ENCODE measurements at regions of chr22 and their contacts with region 1.

Region 1: DNA sequence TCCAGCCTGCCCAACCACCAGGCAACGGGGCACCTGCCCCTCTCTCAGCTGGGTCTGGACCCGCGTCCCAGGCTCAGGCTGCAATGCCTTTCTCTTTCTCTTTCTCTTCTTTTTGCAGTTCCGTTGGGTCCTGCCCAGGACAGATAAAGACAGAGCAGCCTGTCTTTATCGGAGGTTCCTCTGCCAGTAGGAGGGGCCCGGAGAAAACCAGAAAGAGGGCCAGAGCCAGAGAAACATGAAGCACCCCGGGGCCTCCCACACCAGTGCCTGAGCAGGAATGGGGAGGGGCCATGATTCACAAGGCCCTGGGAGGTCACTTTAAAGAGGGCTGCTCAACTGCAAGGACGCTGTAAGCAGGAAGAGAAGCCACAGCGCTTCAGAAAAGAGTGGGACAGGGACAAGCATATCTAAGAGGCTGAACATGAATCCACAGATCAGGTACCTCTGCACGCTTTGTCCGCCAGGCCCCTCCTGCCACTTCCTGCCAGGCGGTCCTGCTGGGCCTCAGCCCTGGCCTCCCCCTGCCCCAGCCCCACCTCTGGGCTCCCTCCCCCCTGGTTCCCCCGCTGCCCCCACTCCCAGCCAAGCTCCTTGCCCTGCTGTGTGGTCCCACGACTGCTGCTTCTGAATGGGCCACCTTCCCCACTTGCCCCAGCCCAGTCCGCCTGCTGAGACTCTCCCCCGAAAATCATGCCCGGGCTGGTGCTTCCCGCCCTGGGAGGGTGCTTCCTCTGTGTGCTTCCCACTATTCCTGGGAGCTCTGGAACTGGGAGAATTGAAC is at the start of gene APOBEC3C:
- DNase-seq: peak; percentile 71 to 86 (median 72)
- H3K4me3 ChIP-seq: peak within 1 kb of the TSS; percentile 70 to 91
- H3K4me3 Mint-ChIP-seq: peak within 1 kb of the TSS; percentile 89 to 98 (median 94)
- H3K27ac ChIP-seq: peak within 1 kb of the TSS; percentile 65
- H3K27ac Mint-ChIP-seq: peak within 1 kb of the TSS; percentile 86 to 97 (median 95)
- H3K4me1 ChIP-seq: peaks cover 36% of the 10 kb centered on the region
- H3K4me1 Mint-ChIP-seq: peaks cover 24 to 62% (median 44%) of the 10 kb centered on the region in 4 donors
- H3K27me3 ChIP-seq: no peaks in the 10 kb centered on the region
- H3K27me3 Mint-ChIP-seq: no peaks in the 10 kb centered on the region
- total RNA-seq, gene APOBEC3C: 42.4 to 43.8 TPM

Region 2: GRCh38 chr22:38572065-38572464 is 442.1 kb before region 1 on chr22:
- CTCF ChIA-PET with region 1: no interaction called
- POLR2A ChIA-PET with region 1: no interaction called
- intact Hi-C with region 1: no loop called
- DNase-seq: peak in 4 of 5 donors; percentile 25 to 39 (median 34)
- H3K4me3 ChIP-seq: no peak overlapping the region
- H3K4me3 Mint-ChIP-seq: no peak overlapping the region
- H3K27ac ChIP-seq: no peak overlapping the region
- H3K27ac Mint-ChIP-seq: no peak overlapping the region
- H3K4me1 ChIP-seq: peaks cover 17% of the 10 kb centered on the region
- H3K4me1 Mint-ChIP-seq: peaks cover 12 to 24% (median 17%) of the 10 kb centered on the region in 4 donors
- H3K27me3 ChIP-seq: no peaks in the 10 kb centered on the region
- H3K27me3 Mint-ChIP-seq: no peaks in the 10 kb centered on the region

Region 3: GRCh38 chr22:39117585-39118191 is 103.6 kb after region 1 on chr22:
- CTCF ChIA-PET with region 1: interaction called, 101 read pairs
- POLR2A ChIA-PET with region 1: interaction called, 3 read pairs
- intact Hi-C with region 1: loop called (anchors 2 kb)
- DNase-seq: peak; percentile 69 to 88 (median 73)
- H3K4me3 ChIP-seq: no peak overlapping the region
- H3K4me3 Mint-ChIP-seq: peak overlapping the region; percentile 53 to 82 (median 74)
- H3K27ac ChIP-seq: peak overlapping the region; percentile 52
- H3K27ac Mint-ChIP-seq: peak overlapping the region; percentile 77 to 92 (median 88)
- H3K4me1 ChIP-seq: peaks cover 35% of the 10 kb centered on the region
- H3K4me1 Mint-ChIP-seq: peaks cover 29 to 49% (median 34%) of the 10 kb centered on the region in 4 donors
- H3K27me3 ChIP-seq: no peaks in the 10 kb centered on the region
- H3K27me3 Mint-ChIP-seq: no peaks in the 10 kb centered on the region

Region 4: DNA sequence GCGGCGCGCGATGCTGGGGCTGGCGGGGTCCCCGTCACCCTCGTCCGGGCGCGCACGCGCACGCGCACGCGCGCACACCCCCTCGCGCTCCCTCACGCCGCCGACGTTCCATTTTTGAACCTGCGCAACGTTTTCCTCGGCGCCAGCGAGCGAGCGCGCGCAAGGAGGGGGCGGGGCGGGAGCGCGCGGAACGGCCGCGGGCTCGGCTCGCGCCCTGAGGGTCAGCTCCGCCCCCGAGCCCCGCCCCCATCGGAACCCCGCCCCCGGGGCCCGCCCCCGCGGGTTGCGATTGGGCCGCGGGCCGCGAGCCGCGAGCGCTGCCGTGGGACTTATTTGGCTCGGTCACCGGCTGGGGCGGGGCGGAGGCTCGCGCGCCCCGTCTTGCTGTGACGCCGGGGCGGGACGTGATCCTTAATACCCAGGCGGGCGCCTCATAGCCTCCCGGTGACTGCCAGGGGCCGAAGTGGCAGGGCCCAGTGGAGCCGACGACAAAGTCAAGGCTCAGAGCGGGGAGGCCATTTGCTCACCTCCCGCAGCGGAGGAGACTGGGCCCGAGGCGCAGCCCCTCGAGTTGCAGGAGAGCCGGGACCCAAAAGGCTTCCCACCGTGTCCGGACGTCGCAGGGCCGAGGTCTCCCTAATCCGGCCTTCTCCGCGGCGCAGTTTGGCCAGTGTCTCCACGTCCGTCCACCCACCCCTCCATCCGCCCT is 138.5 kb after region 1 on chr22 and contains the start of gene CBX7:
- CTCF ChIA-PET with region 1: no interaction called
- POLR2A ChIA-PET with region 1: interaction called, 10 read pairs
- intact Hi-C with region 1: no loop called
- DNase-seq: peak; percentile 90 to 96 (median 94)
- H3K4me3 ChIP-seq: peak within 1 kb of the TSS; percentile 55 to 79
- H3K4me3 Mint-ChIP-seq: peak within 1 kb of the TSS; percentile 84 to 91 (median 88)
- H3K27ac ChIP-seq: peak within 1 kb of the TSS; percentile 78
- H3K27ac Mint-ChIP-seq: peak within 1 kb of the TSS; percentile 88 to 99 (median 93)
- H3K4me1 ChIP-seq: peaks cover 51% of the 10 kb centered on the region
- H3K4me1 Mint-ChIP-seq: peaks cover 22 to 48% (median 35%) of the 10 kb centered on the region in 4 donors
- H3K27me3 ChIP-seq: peaks cover 7% of the 10 kb centered on the region
- H3K27me3 Mint-ChIP-seq: peaks cover 0 to 3% of the 10 kb centered on the region in 2 donors
- total RNA-seq, gene CBX7: 181 to 198 TPM

Region 5: DNA sequence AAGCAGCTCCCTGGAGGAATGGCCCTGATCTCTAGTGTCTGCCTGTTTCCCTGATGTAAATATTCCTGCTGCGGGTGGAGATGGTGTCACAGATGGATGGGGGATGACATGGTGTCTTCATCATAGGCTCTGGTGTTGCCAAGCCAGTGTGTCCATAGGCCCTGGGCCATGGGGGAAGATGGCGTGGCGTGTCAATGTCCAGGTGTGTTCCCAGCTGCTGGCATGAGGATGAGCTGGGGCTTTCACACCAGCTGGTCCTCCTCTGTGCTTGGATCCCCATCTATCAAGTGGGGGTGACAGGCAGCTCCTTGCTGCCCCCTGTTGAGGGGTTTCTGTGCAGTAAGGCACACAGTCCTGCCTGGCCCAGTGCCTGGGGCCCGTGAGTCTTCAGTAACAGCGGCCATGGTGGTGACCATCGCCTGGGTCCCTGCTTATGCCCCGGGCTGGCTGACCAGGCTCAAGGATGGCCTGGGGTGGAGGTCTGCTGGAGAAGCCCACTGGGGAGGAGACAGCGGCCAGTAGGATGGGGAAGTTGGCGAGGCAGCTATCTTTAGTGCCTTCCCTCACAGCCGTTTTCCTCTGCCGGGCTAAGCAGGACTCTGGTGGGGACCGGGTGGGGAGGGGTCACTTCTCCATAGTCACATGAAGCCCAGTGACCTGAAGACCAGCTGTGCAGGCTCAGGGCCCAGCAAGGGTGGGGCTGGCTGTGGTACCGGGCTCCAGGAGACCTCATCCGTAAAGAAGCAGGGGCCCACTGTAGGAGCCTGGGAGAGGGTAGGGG is 292.6 kb after region 1 on chr22:
- CTCF ChIA-PET with region 1: no interaction called
- POLR2A ChIA-PET with region 1: no interaction called
- intact Hi-C with region 1: loop called (anchors 1 kb)
- DNase-seq: peak in 4 of 5 donors; percentile 32 to 45 (median 42)
- H3K4me3 ChIP-seq: no peak overlapping the region
- H3K4me3 Mint-ChIP-seq: no peak overlapping the region
- H3K27ac ChIP-seq: no peak overlapping the region
- H3K27ac Mint-ChIP-seq: peak overlapping the region in 1 of 7 donors; percentile 16
- H3K4me1 ChIP-seq: peaks cover 12% of the 10 kb centered on the region
- H3K4me1 Mint-ChIP-seq: peaks cover 5 to 30% (median 12%) of the 10 kb centered on the region in 4 donors
- H3K27me3 ChIP-seq: no peaks in the 10 kb centered on the region
- H3K27me3 Mint-ChIP-seq: peaks cover 0 to 2% of the 10 kb centered on the region in 2 donors

Measured in CD4-positive, alpha-beta memory T cell (primary cell).